ENCODE measurements at regions of chr17 and their contacts with region 1.

Region 1: DNA sequence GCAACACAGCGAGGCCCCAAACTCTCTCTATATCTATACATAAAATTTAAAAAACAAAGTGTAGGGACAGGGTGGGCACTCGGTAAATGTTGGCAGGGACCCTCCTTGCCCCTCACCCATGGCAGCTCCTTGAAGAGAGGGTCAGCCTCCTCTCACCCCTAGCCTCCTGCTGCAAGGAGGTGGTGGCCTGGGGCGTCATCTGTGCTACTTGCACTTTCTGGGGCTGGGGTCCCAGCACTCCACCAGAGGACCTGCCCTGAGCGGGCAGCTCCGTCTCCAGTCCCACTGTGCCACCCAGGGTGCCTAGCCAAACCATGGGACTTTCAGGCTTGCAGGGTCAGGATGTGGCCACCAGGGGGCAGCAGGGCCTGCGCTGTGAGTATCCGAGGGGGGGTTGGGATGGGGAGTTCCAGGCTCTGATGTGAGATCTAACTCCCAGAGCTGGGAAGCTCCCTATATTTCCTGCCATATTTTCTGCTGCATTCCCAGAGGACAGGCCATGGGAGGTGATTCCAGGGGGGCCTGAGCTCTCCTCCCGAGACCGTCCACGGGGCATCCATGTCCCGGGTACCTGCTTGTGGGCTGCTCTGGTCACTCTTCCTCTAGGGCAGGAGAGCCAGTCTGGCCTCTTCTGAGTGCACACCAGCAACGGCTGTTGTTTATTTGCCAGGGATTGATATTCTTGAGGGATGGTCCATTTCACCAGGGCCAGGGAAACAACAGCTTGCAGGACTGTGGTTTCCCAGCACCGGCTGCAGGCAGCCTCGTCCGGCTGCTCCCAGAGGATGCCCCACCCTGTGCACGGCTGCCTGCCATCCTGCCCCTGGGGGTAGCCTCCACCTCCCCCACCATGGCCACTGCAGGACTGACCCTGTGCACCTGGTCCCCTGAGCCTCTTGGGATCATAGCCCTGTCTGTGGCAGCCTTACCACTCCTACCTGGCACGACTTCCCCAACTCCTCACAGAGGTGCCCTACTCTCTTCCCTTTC is 1.1 kb downstream of the GPR142 start:
- DNase-seq: peak; percentile 45 to 75 (median 65)
- H3K4me3 ChIP-seq: peak overlapping the region; percentile 42
- H3K4me3 Mint-ChIP-seq: peak overlapping the region; percentile 24 to 88 (median 65)
- H3K27ac ChIP-seq: no peak overlapping the region
- H3K27ac Mint-ChIP-seq: peak overlapping the region in 1 of 8 donors; percentile 76
- H3K4me1 ChIP-seq: peaks cover 19% of the 10 kb centered on the region
- H3K4me1 Mint-ChIP-seq: peaks cover 7 to 16% (median 10%) of the 10 kb centered on the region in 3 donors
- H3K27me3 ChIP-seq: no peaks in the 10 kb centered on the region
- H3K27me3 Mint-ChIP-seq: peaks cover under 1 to 5% of the 10 kb centered on the region in 2 donors

Region 2: GRCh38 chr17:73255671-73256181 is 1112.7 kb before region 1 on chr17:
- CTCF ChIA-PET with region 1: no interaction called
- POLR2A ChIA-PET with region 1: no interaction called
- DNase-seq: peak; percentile 20 to 63 (median 38)
- H3K4me3 ChIP-seq: no peak overlapping the region
- H3K4me3 Mint-ChIP-seq: no peak overlapping the region
- H3K27ac ChIP-seq: no peak overlapping the region
- H3K27ac Mint-ChIP-seq: no peak overlapping the region
- H3K4me1 ChIP-seq: no peaks in the 10 kb centered on the region
- H3K4me1 Mint-ChIP-seq: peaks cover 4 to 7% (median 4%) of the 10 kb centered on the region in 3 donors
- H3K27me3 ChIP-seq: no peaks in the 10 kb centered on the region
- H3K27me3 Mint-ChIP-seq: peaks cover 0 to 4% of the 10 kb centered on the region in 2 donors

Region 3: GRCh38 chr17:74152591-74153455 is 215.6 kb before region 1 on chr17:
- CTCF ChIA-PET with region 1: no interaction called
- POLR2A ChIA-PET with region 1: no interaction called
- DNase-seq: no peak
- H3K4me3 ChIP-seq: no peak overlapping the region
- H3K4me3 Mint-ChIP-seq: no peak overlapping the region
- H3K27ac ChIP-seq: no peak overlapping the region
- H3K27ac Mint-ChIP-seq: no peak overlapping the region
- H3K4me1 ChIP-seq: no peaks in the 10 kb centered on the region
- H3K4me1 Mint-ChIP-seq: no peaks in the 10 kb centered on the region
- H3K27me3 ChIP-seq: no peaks in the 10 kb centered on the region
- H3K27me3 Mint-ChIP-seq: peaks cover 22 to 50% of the 10 kb centered on the region in 2 donors

Region 4: GRCh38 chr17:74351552-74352210 is 16.7 kb before region 1 on chr17:
- CTCF ChIA-PET with region 1: interaction called, 22 read pairs
- POLR2A ChIA-PET with region 1: no interaction called
- DNase-seq: no peak
- H3K4me3 ChIP-seq: no peak overlapping the region
- H3K4me3 Mint-ChIP-seq: peak overlapping the region in 1 of 7 donors; percentile 23
- H3K27ac ChIP-seq: no peak overlapping the region
- H3K27ac Mint-ChIP-seq: no peak overlapping the region
- H3K4me1 ChIP-seq: no peaks in the 10 kb centered on the region
- H3K4me1 Mint-ChIP-seq: peaks cover 0 to 14% (median 2%) of the 10 kb centered on the region in 3 donors
- H3K27me3 ChIP-seq: peaks cover 31% of the 10 kb centered on the region
- H3K27me3 Mint-ChIP-seq: peaks cover 26 to 55% of the 10 kb centered on the region in 2 donors

Region 5: GRCh38 chr17:74379495-74380085 is 11.2 kb after region 1 on chr17:
- CTCF ChIA-PET with region 1: interaction called, 44 read pairs
- POLR2A ChIA-PET with region 1: no interaction called
- DNase-seq: peak; percentile 81 to 93 (median 89)
- H3K4me3 ChIP-seq: no peak overlapping the region
- H3K4me3 Mint-ChIP-seq: peak overlapping the region in 2 of 7 donors; percentile 14 to 69
- H3K27ac ChIP-seq: no peak overlapping the region
- H3K27ac Mint-ChIP-seq: peak overlapping the region in 1 of 8 donors; percentile 81
- H3K4me1 ChIP-seq: peaks cover 14% of the 10 kb centered on the region
- H3K4me1 Mint-ChIP-seq: peaks cover 4 to 13% (median 10%) of the 10 kb centered on the region in 3 donors
- H3K27me3 ChIP-seq: no peaks in the 10 kb centered on the region
- H3K27me3 Mint-ChIP-seq: peaks cover 0 to under 1% of the 10 kb centered on the region in 2 donors

Region 6: GRCh38 chr17:74408262-74408661 is 39.9 kb after region 1 on chr17:
- CTCF ChIA-PET with region 1: no interaction called
- POLR2A ChIA-PET with region 1: no interaction called
- DNase-seq: no peak
- H3K4me3 ChIP-seq: no peak overlapping the region
- H3K4me3 Mint-ChIP-seq: no peak overlapping the region
- H3K27ac ChIP-seq: no peak overlapping the region
- H3K27ac Mint-ChIP-seq: no peak overlapping the region
- H3K4me1 ChIP-seq: no peaks in the 10 kb centered on the region
- H3K4me1 Mint-ChIP-seq: peaks cover 0 to 3% (median 0%) of the 10 kb centered on the region in 3 donors
- H3K27me3 ChIP-seq: no peaks in the 10 kb centered on the region
- H3K27me3 Mint-ChIP-seq: peaks cover 9 to 14% of the 10 kb centered on the region in 2 donors

Region 7: GRCh38 chr17:74457146-74457819 is 88.9 kb after region 1 on chr17:
- CTCF ChIA-PET with region 1: interaction called, 19 read pairs
- POLR2A ChIA-PET with region 1: no interaction called
- DNase-seq: peak; percentile 49 to 79 (median 63)
- H3K4me3 ChIP-seq: no peak overlapping the region
- H3K4me3 Mint-ChIP-seq: peak overlapping the region in 6 of 7 donors; percentile 8 to 61 (median 32)
- H3K27ac ChIP-seq: no peak overlapping the region
- H3K27ac Mint-ChIP-seq: peak overlapping the region in 4 of 8 donors; percentile 8 to 73 (median 62)
- H3K4me1 ChIP-seq: peaks cover 40% of the 10 kb centered on the region
- H3K4me1 Mint-ChIP-seq: peaks cover 51 to 62% (median 54%) of the 10 kb centered on the region in 3 donors
- H3K27me3 ChIP-seq: no peaks in the 10 kb centered on the region
- H3K27me3 Mint-ChIP-seq: peaks cover 0 to 3% of the 10 kb centered on the region in 2 donors

Region 8: DNA sequence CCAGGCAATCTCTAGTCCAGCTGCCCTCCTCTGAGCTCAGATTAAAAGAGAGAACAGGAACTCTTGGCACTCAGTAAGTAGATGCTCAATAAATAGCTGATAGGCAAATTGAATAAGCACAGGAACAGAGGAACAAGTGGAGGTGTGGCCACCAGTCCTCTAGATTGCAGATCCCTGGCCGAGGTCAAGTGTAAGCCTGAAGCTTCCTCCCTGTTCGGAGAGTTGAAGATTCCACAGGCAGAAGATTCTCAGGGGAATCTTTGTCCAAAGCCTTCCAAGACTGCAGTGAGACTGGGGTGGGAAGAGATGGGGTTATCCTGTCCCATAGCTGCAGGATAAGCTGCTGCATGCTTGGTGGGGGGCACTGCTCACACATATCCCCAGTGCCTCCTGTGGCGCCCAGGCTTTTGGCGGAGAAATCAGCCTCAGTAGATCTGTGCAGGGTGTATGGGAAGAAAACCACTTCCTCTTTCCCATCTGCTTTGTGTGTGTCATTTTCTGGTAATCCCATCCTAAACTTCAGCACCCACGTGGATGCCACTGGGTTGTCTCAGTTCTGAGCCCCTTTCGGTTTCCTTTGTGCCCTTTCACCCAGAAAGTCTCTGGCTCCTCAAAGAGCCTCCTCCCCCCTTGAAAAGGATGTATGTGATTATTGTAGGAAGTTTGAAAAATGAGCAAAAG is 110.2 kb after region 1 on chr17:
- CTCF ChIA-PET with region 1: interaction called, 13 read pairs
- POLR2A ChIA-PET with region 1: no interaction called
- DNase-seq: peak in 3 of 5 donors; percentile 8 to 54 (median 29)
- H3K4me3 ChIP-seq: peak overlapping the region; percentile 51
- H3K4me3 Mint-ChIP-seq: peak overlapping the region; percentile 12 to 83 (median 69)
- H3K27ac ChIP-seq: peak overlapping the region; percentile 25
- H3K27ac Mint-ChIP-seq: peak overlapping the region; percentile 80 to 97 (median 90)
- H3K4me1 ChIP-seq: peaks cover 56% of the 10 kb centered on the region
- H3K4me1 Mint-ChIP-seq: peaks cover 77 to 81% (median 79%) of the 10 kb centered on the region in 3 donors
- H3K27me3 ChIP-seq: no peaks in the 10 kb centered on the region
- H3K27me3 Mint-ChIP-seq: peaks cover 0 to 2% of the 10 kb centered on the region in 2 donors

Region 9: DNA sequence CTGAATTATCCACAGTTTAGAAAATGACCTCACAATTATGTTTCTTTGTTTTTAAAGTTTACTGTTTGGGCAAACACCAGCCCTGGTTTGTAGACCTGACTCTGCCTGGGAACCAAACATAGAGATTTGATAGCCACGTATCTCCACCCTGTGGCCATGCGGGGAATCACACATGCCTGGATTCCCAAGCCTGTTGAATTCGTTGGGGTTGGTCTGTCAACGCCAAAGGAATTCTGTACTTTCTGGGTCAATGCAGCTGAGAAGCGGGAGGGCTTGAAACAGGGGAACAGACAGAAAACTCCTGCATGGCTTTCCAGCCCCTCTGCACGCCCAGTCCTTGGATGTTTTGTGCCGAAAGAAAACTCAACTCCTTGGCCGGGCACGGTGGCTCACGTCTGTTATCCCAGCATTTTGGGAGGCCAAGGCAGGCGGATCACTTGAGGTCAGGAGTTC is 125.0 kb after region 1 on chr17:
- CTCF ChIA-PET with region 1: interaction called, 18 read pairs
- POLR2A ChIA-PET with region 1: no interaction called
- DNase-seq: peak; percentile 46 to 75 (median 59)
- H3K4me3 ChIP-seq: no peak overlapping the region
- H3K4me3 Mint-ChIP-seq: no peak overlapping the region
- H3K27ac ChIP-seq: no peak overlapping the region
- H3K27ac Mint-ChIP-seq: peak overlapping the region in 1 of 8 donors; percentile 33
- H3K4me1 ChIP-seq: no peaks in the 10 kb centered on the region
- H3K4me1 Mint-ChIP-seq: peaks cover 20 to 26% (median 23%) of the 10 kb centered on the region in 3 donors
- H3K27me3 ChIP-seq: no peaks in the 10 kb centered on the region
- H3K27me3 Mint-ChIP-seq: no peaks in the 10 kb centered on the region

Region 10: DNA sequence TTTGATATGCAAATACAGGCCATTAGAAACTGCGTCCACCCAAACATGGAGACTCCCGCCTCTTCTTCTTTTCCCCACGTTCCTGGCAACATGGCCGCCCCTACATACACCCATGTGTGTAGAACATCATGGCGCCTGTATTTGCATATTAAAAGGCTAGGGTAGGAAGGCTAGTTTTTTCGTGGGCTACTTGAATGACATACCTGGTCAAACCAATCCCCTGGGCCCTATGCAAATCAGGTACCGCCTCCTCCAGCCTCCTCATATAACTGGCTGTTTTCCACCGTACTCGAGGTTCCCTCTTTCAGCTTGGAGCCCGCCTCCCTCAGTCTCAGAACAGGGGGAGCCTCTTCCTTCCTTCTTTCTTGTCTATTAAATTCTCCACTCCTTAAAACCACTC is 163.7 kb after region 1 on chr17:
- CTCF ChIA-PET with region 1: interaction called, 11 read pairs
- POLR2A ChIA-PET with region 1: no interaction called
- DNase-seq: no peak
- H3K4me3 ChIP-seq: no peak overlapping the region
- H3K4me3 Mint-ChIP-seq: peak overlapping the region in 1 of 7 donors; percentile 32
- H3K27ac ChIP-seq: no peak overlapping the region
- H3K27ac Mint-ChIP-seq: peak overlapping the region in 1 of 8 donors; percentile 40
- H3K4me1 ChIP-seq: no peaks in the 10 kb centered on the region
- H3K4me1 Mint-ChIP-seq: peaks cover 3 to 5% (median 3%) of the 10 kb centered on the region in 3 donors
- H3K27me3 ChIP-seq: peaks cover 9% of the 10 kb centered on the region
- H3K27me3 Mint-ChIP-seq: peaks cover 19 to 70% of the 10 kb centered on the region in 2 donors

Region 11: DNA sequence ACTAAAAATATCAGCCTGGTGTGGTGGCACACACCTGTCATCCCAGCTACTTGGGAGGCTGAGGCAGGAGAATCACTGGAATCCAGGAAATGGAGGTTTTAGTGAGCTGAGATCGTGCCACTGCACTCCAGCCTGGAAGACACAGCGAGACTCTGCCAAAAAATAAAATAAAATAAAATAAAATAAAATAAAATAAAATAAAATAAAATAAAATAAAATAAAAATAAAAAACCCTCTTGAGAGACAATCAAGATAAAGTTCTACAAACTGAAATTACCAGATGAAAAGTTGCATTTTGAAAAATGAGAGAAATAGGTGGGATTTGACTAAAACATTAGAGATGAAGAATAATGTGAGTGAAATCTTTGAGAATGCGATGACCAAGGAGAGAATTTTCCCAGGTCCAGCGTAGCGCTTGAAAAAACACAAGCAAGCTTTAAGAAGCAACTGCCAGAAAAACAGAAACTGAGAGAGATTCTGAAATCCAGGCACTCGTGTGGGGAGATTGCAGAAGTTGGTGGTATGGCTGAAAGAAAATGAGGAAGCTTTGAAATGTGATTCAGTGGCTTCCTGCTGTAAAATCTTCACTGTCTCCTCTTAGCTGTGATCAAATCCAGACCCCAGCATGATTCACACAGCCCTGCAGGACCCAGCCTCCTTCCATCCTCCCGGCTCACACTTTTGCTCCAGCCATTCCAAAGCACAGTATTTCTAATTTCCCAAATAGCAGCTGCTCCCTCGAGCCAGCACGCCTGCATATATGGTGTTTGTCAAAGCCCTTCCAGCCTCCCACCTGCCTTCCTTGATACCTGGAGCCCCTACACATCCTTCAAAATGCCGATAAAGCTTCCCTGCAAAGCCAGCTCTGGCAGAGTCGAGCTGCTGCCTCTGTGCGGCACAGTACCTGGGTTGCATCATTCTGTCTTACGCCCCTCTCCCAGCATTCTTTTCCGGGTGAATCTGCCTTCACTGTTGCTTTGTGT is 263.4 kb after region 1 on chr17:
- CTCF ChIA-PET with region 1: no interaction called
- POLR2A ChIA-PET with region 1: no interaction called
- DNase-seq: no peak
- H3K4me3 ChIP-seq: no peak overlapping the region
- H3K4me3 Mint-ChIP-seq: no peak overlapping the region
- H3K27ac ChIP-seq: no peak overlapping the region
- H3K27ac Mint-ChIP-seq: peak overlapping the region in 1 of 8 donors; percentile 17
- H3K4me1 ChIP-seq: no peaks in the 10 kb centered on the region
- H3K4me1 Mint-ChIP-seq: peaks cover 0 to 4% (median 0%) of the 10 kb centered on the region in 3 donors
- H3K27me3 ChIP-seq: no peaks in the 10 kb centered on the region
- H3K27me3 Mint-ChIP-seq: peaks cover 39 to 64% of the 10 kb centered on the region in 2 donors